Activated CD4-positive, alpha-beta T cell treated with anti-CD3 and anti-CD28 coated beads, Interleukin-2, amount 10 ng/mL, durations not matched to agents 7 days and 5 days (primary cell): ENCODE measurements at regions of chr2 and their contacts with region 1.

Region 1: GRCh38 chr2:113390124-113390849 is 47.2 kb upstream of the ZNG1B start:
- DNase-seq: peak; percentile 79
- H3K4me3 Mint-ChIP-seq: peak overlapping the region; percentile 68
- H3K27ac Mint-ChIP-seq: peak overlapping the region; percentile 86
- H3K4me1 Mint-ChIP-seq: peaks cover 14% of the 10 kb centered on the region
- H3K27me3 Mint-ChIP-seq: peaks cover 18% of the 10 kb centered on the region

Region 2: DNA sequence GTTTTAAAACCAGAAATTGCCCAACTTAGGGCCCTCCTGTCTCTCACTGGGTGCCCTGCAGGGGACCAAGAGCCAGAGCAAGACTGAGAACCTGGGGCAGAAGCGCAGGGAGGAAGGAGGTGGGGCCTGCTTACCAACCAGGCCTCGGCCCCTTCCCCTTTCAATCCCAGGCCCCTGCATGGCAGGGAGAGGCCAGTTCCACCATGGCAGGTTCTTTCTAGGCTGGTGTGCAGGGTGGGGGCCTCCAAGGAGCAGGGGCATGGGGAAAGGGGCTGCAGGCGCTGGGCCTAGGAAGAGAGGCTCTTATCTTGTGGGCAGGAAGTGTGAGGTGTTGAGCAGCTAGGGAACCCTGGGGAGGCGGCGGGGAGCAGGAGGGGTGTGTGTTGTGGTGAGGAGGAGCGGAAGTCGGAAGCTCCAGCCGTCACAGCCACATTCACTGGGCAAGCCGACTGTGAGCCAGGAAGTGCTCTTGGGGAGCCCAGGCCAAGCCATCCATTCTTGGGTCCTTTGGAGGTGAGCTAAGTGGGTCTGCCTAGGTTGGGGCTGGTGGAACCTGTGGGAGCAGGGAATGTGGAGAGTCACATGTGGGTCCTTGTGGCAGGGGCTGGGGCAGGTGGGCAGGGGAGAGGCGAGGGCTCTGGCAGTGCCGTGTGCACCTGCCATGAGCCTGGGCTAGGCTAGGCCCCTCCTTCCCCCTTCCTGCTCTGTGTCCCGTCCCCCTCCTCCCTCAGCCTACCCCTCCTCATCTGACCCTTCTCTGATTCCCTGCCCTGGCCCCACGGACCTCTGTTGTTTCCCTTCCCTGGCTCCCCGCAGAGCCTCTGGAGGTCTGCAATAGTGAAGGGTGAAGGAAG is 216.5 kb before region 1 on chr2 and contains the start of gene PSD4:
- CTCF ChIA-PET with region 1: interaction called, 11 read pairs
- POLR2A ChIA-PET with region 1: no interaction called
- DNase-seq: peak; percentile 94
- H3K4me3 Mint-ChIP-seq: peak within 1 kb of the TSS; percentile 84
- H3K27ac Mint-ChIP-seq: peak within 1 kb of the TSS; percentile 88
- H3K4me1 Mint-ChIP-seq: peaks cover 73% of the 10 kb centered on the region
- H3K27me3 Mint-ChIP-seq: peaks cover 2% of the 10 kb centered on the region
- total RNA-seq, gene PSD4: 329 to 335 TPM

Region 3: DNA sequence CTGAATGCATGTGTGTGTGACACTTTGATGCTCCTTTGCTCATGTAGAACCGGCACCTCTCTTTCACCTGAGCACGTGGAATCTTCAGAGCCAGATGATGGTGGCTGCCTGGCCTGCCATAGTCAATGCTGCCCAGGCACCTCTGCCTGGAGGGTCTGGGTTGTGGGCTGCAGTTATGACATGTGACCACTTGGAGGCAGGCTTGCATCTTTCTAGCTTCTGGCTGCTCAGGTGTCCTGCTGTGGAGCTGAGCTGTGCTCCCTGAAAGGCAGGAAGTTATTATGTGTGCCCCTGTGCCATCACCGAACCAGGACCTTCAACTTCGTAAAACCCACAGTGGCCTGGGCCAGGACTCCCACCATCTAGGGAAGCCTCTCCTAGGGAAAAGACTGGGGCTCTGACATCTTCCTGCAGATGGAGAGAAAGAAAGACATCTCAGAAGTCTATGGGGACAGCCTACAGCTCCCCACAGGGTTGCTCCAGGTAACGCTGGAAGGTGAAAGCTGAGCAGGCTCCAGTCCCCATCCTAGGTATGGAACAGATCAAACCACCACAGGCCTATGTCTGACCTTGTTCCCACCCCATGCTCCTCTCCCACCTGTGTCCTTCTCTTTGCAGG is 186.3 kb before region 1 on chr2:
- CTCF ChIA-PET with region 1: interaction called, 10 read pairs
- POLR2A ChIA-PET with region 1: no interaction called
- DNase-seq: peak; percentile 80
- H3K4me3 Mint-ChIP-seq: no peak overlapping the region
- H3K27ac Mint-ChIP-seq: peak overlapping the region; percentile 65
- H3K4me1 Mint-ChIP-seq: peaks cover 12% of the 10 kb centered on the region
- H3K27me3 Mint-ChIP-seq: no peaks in the 10 kb centered on the region

Region 4: GRCh38 chr2:113248997-113249770 is 141.1 kb before region 1 on chr2:
- CTCF ChIA-PET with region 1: interaction called, 18 read pairs
- POLR2A ChIA-PET with region 1: no interaction called
- DNase-seq: peak; percentile 82
- H3K4me3 Mint-ChIP-seq: no peak overlapping the region
- H3K27ac Mint-ChIP-seq: peak overlapping the region; percentile 85
- H3K4me1 Mint-ChIP-seq: peaks cover 55% of the 10 kb centered on the region
- H3K27me3 Mint-ChIP-seq: peaks cover 2% of the 10 kb centered on the region